ENCODE measurements at regions of chr5 and their contacts with region 1.

Region 1: DNA sequence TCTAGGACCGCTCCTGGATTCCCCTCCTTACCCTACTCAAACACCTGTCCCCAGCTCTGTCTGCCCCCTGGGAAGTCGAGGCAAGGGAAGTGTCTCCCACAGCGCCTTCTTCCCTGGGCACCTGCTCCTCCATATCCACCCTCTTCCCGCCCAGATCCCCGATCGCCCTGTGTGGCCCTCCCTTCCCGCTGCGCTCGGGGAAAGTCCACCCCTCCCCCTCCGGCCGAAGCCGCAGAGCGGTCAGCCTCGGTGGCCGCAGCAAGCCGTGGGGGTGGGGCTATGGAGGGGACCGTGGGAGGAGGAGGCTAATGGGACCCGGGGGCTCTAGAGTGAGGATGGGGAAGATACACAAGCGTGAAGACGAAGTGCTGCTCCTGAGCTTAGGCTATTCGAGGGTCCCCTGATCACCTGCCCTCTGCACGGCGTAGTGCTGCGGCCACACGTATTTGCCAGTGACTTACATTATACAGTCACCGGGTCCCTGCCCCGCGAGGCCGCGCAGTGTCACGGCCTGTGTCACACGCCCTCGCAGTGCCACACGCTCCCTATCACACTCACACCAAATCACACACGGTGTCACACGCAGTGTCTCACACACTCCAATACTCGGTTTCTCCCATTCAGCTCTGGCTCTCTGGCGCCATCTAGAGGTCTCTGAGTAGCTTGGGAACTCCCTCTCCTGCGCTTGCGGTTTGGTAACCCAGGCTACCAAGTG is 658 bp upstream of the PCDH1 start:
- DNase-seq: no peak
- H3K4me3 ChIP-seq: peak overlapping the region; percentile 70 to 82 (median 73)
- H3K27ac ChIP-seq: peak overlapping the region; percentile 73 to 82 (median 77)
- H3K4me1 ChIP-seq: peaks cover 63 to 90% (median 87%) of the 10 kb centered on the region in 4 donors
- H3K27me3 ChIP-seq: peaks cover 0 to 86% (median 50%) of the 10 kb centered on the region in 4 donors
- CTCF ChIP-seq: peak; percentile 87 to 96 (median 94)
- EP300 ChIP-seq: no peak
- POLR2A ChIP-seq: no peak

Region 2: DNA sequence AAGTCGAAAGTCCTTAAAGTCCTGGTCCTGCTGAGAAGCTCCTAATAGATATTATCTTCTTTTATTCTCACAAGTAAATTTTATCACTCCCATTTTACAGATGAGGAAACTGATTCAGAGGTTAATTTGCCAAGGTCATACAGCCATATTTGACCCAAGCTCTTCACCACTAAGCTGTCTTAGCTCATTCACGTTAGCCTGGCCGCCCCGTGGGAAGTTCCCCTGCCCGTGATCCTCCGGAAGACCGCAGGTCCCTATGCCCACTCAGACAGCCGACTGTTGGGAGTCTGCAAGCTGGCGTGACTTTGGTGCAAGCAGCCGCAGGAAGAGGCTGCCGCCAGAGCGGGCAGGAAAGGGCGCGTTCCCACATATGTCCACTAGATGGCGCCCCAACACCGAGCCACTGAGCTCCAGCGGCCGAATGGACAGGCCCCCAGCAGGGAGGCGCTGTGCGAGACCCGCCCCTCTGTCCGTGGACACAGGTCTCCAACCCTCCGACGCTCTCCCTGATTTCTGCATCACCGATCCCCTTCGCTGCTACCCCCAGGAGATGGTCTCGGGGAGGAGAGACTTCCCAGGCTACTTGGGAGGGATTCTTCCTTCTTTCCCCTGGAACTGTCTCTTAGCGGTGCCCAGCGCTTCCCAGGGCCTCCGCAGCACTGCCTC is 186.9 kb before region 1 on chr5:
- intact Hi-C with region 1: loop called (anchors 2 kb)
- DNase-seq: peak; percentile 93
- H3K4me3 ChIP-seq: peak overlapping the region; percentile 30 to 46 (median 37)
- H3K27ac ChIP-seq: no peak overlapping the region
- H3K4me1 ChIP-seq: peaks cover 9 to 15% (median 10%) of the 10 kb centered on the region in 4 donors
- H3K27me3 ChIP-seq: peaks cover 0 to 50% (median 0%) of the 10 kb centered on the region in 4 donors
- CTCF ChIP-seq: peak in 2 of 3 experiments; percentile 98
- EP300 ChIP-seq: no peak
- POLR2A ChIP-seq: no peak

Region 3: GRCh38 chr5:141701360-141702119 is 177.3 kb before region 1 on chr5:
- intact Hi-C with region 1: loop called (anchors 1 kb)
- DNase-seq: no peak
- H3K4me3 ChIP-seq: peak overlapping the region in 3 of 4 donors; percentile 56 to 67 (median 59)
- H3K27ac ChIP-seq: no peak overlapping the region
- H3K4me1 ChIP-seq: peaks cover 21 to 22% (median 22%) of the 10 kb centered on the region in 4 donors
- H3K27me3 ChIP-seq: peaks cover 0 to 84% (median 41%) of the 10 kb centered on the region in 4 donors
- CTCF ChIP-seq: no peak
- EP300 ChIP-seq: no peak
- POLR2A ChIP-seq: no peak

Region 4: DNA sequence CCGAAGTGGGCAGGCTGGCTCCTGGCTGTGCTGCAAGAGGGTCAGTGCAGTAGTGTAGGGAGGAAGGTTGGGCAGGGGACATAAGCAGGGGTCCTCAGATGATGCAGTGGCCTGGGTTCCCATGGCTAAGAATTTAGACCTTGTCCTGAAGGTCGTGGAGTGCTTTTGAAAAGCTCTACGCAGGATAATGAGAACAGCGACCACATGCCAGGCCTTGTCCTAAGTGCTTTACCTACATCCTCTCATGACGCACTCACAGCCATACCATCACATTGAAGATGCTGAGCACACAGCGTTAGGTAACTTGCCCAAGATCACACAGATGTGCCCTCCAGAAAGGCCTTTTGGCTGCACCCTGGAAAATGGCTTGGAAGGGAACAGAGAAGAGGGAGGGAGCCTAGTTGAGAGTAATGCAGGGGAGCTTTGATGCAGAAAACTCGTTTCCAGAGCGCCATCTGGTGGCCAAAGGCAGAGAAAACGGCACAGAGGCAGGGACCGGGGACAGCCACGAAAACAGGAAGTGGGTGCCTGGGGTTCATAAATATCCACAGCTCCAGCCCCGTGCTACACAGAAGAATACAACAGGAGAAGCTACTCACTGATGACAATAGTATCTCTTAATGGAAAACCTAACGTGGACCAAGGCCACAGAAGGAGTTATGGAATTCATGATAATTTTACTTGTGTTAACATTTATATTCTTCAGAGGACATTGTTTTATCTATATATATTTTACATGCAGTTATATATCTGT is 81.8 kb after region 1 on chr5:
- intact Hi-C with region 1: loop called (anchors 2 kb)
- DNase-seq: peak; percentile 98
- H3K4me3 ChIP-seq: no peak overlapping the region
- H3K27ac ChIP-seq: peak overlapping the region in 1 of 4 donors; percentile 1
- H3K4me1 ChIP-seq: peaks cover 29 to 44% (median 37%) of the 10 kb centered on the region in 4 donors
- H3K27me3 ChIP-seq: peaks cover 0 to 11% (median 0%) of the 10 kb centered on the region in 4 donors
- CTCF ChIP-seq: peak; percentile 83 to 91 (median 88)
- EP300 ChIP-seq: no peak
- POLR2A ChIP-seq: no peak

Measured in esophagus muscularis mucosa (tissue), 4 donors.